ENCODE measurements at regions of chr10 and their contacts with region 1.

Region 1: GRCh38 chr10:6088721-6089390 is at the start of gene RBM17:
- DNase-seq: peak; percentile 82
- ATAC-seq: peak; percentile 88
- H3K4me3 ChIP-seq: peak within 1 kb of the TSS; percentile 99
- H3K27ac ChIP-seq: peak within 1 kb of the TSS; percentile 81
- H3K4me1 ChIP-seq: peaks cover 3% of the 10 kb centered on the region; the same call in 1 of the 2 replicates
- H3K27me3 ChIP-seq: no peaks in the 10 kb centered on the region
- CTCF ChIP-seq: peak; percentile 100; a peak in 5 of 6 replicates
- EP300 ChIP-seq: no peak; a peak in 1 of 4 replicates
- POLR2A ChIP-seq: peak; percentile 85
- RAD21 ChIP-seq: peak; percentile 95
- polyA plus RNA-seq, gene RBM17: 28.4 to 45.0 TPM

Region 2: DNA sequence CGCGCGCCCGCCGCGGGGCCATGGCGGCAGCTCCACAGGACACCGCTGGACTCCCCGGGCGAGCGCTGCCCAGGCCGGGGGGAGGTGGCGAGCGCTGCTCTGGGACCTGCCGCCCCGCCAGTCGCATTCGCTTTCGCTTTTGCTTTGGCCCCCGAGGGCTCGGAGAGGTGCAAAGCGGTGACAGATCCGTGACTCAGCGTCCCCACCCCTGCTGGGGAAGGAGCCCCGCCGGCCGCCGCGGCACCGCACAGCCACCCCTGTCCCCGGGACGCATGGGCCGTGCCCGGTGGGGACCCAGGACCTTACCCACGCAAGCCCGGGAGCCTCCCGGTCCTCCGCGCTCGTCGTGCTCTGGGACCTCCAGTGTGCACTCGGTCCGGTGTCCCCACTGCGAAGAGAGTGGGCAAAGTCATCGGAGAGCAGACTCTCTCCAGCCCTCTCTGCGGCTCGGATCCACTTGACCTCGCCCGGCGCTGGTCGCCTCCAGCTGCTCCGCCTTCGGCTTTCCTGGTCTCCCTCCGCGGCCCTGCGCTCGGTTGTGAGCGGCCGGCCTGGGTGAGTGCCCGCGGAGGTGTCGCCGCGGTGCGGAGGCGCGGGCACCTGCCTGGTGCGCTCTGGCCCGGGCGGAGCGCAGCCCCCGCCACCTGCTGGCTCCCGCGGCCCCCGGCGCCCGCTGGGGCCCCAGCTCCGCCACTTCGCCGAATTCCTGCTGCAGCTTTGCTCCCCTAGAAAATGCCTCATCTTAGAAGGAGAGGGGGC is 111.2 kb before region 1 on chr10 and contains the start of gene IL15RA:
- CTCF ChIA-PET with region 1: interaction called, 6 read pairs
- POLR2A ChIA-PET with region 1: interaction called, 5 read pairs
- RAD21 ChIA-PET with region 1: interaction called, 6 read pairs
- SMC1A ChIA-PET with region 1: interaction called, 7 read pairs
- in situ Hi-C with region 1: no loop called
- intact Hi-C with region 1: loop called (anchors 5 kb)
- DNase-seq: no peak
- ATAC-seq: peak; percentile 78
- H3K4me3 ChIP-seq: peak within 1 kb of the TSS; percentile 95
- H3K27ac ChIP-seq: peak within 1 kb of the TSS; percentile 88
- H3K4me1 ChIP-seq: peaks cover 12% of the 10 kb centered on the region
- H3K27me3 ChIP-seq: no peaks in the 10 kb centered on the region; a peak in 1 of 4 replicates
- CTCF ChIP-seq: peak; percentile 22 to 54 (median 30); a peak in 5 of 6 replicates
- EP300 ChIP-seq: no peak
- POLR2A ChIP-seq: peak; percentile 65
- RAD21 ChIP-seq: peak; percentile 21; the same call in 1 of the 2 replicates
- polyA plus RNA-seq, gene IL15RA: 2.0 to 4.2 TPM

Region 3: DNA sequence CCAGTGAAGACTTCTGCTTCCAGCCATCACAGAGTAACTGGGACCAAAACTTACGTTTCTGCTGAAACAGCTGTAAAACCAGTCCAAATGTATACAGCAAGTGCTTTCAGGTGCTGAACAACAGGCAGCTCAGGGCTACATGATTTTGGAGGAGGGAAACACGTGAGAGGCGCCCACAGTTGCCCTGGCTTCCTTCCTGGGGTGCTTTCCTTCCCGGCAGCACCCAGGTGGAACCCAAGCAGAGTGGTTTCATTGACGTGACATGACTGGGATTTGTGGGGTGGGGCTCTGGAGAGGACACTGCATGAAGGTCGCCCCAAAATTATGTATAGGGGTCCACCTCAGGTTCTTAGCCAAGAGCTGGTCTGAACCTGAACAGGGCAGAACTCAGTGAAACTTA is 60.9 kb before region 1 on chr10:
- CTCF ChIA-PET with region 1: interaction called, 12 read pairs
- POLR2A ChIA-PET with region 1: interaction called, 3 read pairs
- RAD21 ChIA-PET with region 1: interaction called, 3 read pairs
- SMC1A ChIA-PET with region 1: interaction called, 4 read pairs
- in situ Hi-C with region 1: no loop called
- intact Hi-C with region 1: no loop called
- DNase-seq: no peak
- ATAC-seq: no peak
- H3K4me3 ChIP-seq: no peak overlapping the region
- H3K27ac ChIP-seq: no peak overlapping the region
- H3K4me1 ChIP-seq: no peaks in the 10 kb centered on the region
- H3K27me3 ChIP-seq: no peaks in the 10 kb centered on the region
- CTCF ChIP-seq: no peak
- EP300 ChIP-seq: no peak
- POLR2A ChIP-seq: no peak
- RAD21 ChIP-seq: no peak

Region 4: GRCh38 chr10:6062101-6062771 is 26.6 kb before region 1 on chr10 and contains the start of gene IL2RA:
- CTCF ChIA-PET with region 1: interaction called, 34 read pairs
- POLR2A ChIA-PET with region 1: interaction called, 7 read pairs
- RAD21 ChIA-PET with region 1: interaction called, 9 read pairs
- SMC1A ChIA-PET with region 1: interaction called, 13 read pairs
- in situ Hi-C with region 1: no loop called
- intact Hi-C with region 1: no loop called
- DNase-seq: no peak
- ATAC-seq: peak; percentile 65
- H3K4me3 ChIP-seq: peak within 1 kb of the TSS; percentile 43; the same call in 1 of the 2 replicates
- H3K27ac ChIP-seq: peak within 1 kb of the TSS; percentile 14; the same call in 1 of the 2 replicates
- H3K4me1 ChIP-seq: peaks cover 28% of the 10 kb centered on the region
- H3K27me3 ChIP-seq: no peaks in the 10 kb centered on the region
- CTCF ChIP-seq: no peak
- EP300 ChIP-seq: no peak
- POLR2A ChIP-seq: no peak
- RAD21 ChIP-seq: no peak
- polyA plus RNA-seq, gene IL2RA: 3.3 to 5.1 TPM

Region 5: GRCh38 chr10:6108603-6109443 is 20.0 kb after region 1 on chr10:
- CTCF ChIA-PET with region 1: interaction called, 13 read pairs
- POLR2A ChIA-PET with region 1: no interaction called
- RAD21 ChIA-PET with region 1: interaction called, 3 read pairs
- SMC1A ChIA-PET with region 1: interaction called, 3 read pairs
- in situ Hi-C with region 1: no loop called
- intact Hi-C with region 1: no loop called
- DNase-seq: no peak
- ATAC-seq: peak; percentile 72
- H3K4me3 ChIP-seq: no peak overlapping the region
- H3K27ac ChIP-seq: no peak overlapping the region
- H3K4me1 ChIP-seq: no peaks in the 10 kb centered on the region
- H3K27me3 ChIP-seq: no peaks in the 10 kb centered on the region
- CTCF ChIP-seq: peak; percentile 50 to 77 (median 74); a peak in 5 of 6 replicates
- EP300 ChIP-seq: no peak
- POLR2A ChIP-seq: no peak
- RAD21 ChIP-seq: peak; percentile 79

Region 6: GRCh38 chr10:6202684-6203330 is 114.0 kb after region 1 on chr10 and contains the start of gene PFKFB3:
- CTCF ChIA-PET with region 1: interaction called, 11 read pairs
- POLR2A ChIA-PET with region 1: interaction called, 9 read pairs
- RAD21 ChIA-PET with region 1: interaction called, 5 read pairs
- SMC1A ChIA-PET with region 1: interaction called, 5 read pairs
- in situ Hi-C with region 1: no loop called
- intact Hi-C with region 1: loop called (anchors 5 kb)
- DNase-seq: peak; percentile 59
- ATAC-seq: peak; percentile 80
- H3K4me3 ChIP-seq: peak within 1 kb of the TSS; percentile 95
- H3K27ac ChIP-seq: peak within 1 kb of the TSS; percentile 35; the same call in 1 of the 2 replicates
- H3K4me1 ChIP-seq: peaks cover 10% of the 10 kb centered on the region
- H3K27me3 ChIP-seq: no peaks in the 10 kb centered on the region
- CTCF ChIP-seq: peak; percentile 84 to 96 (median 90); a peak in 5 of 6 replicates
- EP300 ChIP-seq: peak in 1 of 2 experiments; percentile 8; a peak in 1 of 4 replicates
- POLR2A ChIP-seq: peak; percentile 100
- RAD21 ChIP-seq: peak; percentile 76
- polyA plus RNA-seq, gene PFKFB3: 1.6 to 2.6 TPM

Measured in GM12878 (cell line).